Mammary epithelial cell (primary cell): ENCODE measurements at regions of chr4 and their contacts with region 1.

Region 1: GRCh38 chr4:126957556-126957955 is 675.2 kb upstream of the INTU start:
- DNase-seq: peak; percentile 10
- H3K4me3 ChIP-seq: no peak overlapping the region
- H3K27ac ChIP-seq: no peak overlapping the region
- H3K4me1 ChIP-seq: no peaks in the 10 kb centered on the region
- H3K27me3 ChIP-seq: no peaks in the 10 kb centered on the region
- CTCF ChIP-seq: peak; percentile 16 to 40

Region 2: DNA sequence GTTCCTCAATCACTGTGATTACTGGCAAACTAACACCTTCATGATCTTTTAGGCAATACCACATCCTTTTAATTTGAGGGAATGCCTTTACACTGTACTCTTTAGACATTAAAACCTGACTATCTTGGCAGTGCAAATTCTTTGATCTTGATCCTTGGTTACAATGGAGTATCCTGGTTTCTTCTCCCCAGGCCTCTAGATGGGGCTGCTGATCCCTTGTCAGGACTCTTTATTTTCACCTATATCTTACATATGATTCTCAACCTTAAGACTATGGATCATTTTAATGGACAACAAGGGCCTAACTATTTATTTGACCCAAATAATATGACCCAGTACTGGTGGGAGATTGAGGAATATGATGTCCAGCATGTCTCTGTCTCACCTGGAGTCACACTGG is 330.3 kb before region 1 on chr4:
- CTCF ChIA-PET with region 1: no interaction called
- dilution Hi-C with region 1: no loop called
- in situ Hi-C with region 1: no loop called
- intact Hi-C with region 1: loop called (anchors 1 kb)
- DNase-seq: peak; percentile 12
- H3K4me3 ChIP-seq: no peak overlapping the region
- H3K27ac ChIP-seq: no peak overlapping the region
- H3K4me1 ChIP-seq: no peaks in the 10 kb centered on the region
- H3K27me3 ChIP-seq: no peaks in the 10 kb centered on the region
- CTCF ChIP-seq: peak; percentile 54 to 74